K562 (cell line): ENCODE measurements at regions of chr16 and their contacts with region 1.

Region 1: GRCh38 chr16:66961065-66961744 is at the start of gene CES3:
- DNase-seq: peak; percentile 81 to 90 (median 86)
- ATAC-seq: peak; percentile 100
- H3K4me3 ChIP-seq: peak within 1 kb of the TSS; percentile 30
- H3K27ac ChIP-seq: no peak within 1 kb of the TSS; the same call in 2 of the 3 replicates
- H3K4me1 ChIP-seq: peaks cover 0 to 7% of the 10 kb centered on the region in 2 experiments; a peak in 2 of 5 replicates
- H3K27me3 ChIP-seq: peaks cover 2 to 13% of the 10 kb centered on the region in 2 experiments; a peak in 2 of 5 replicates
- CTCF ChIP-seq: peak; percentile 92 to 98 (median 96)
- EP300 ChIP-seq: no peak
- POLR2A ChIP-seq: no peak
- RAD21 ChIP-seq: peak in 1 of 2 experiments; percentile 43; a peak in 2 of 4 replicates
- polyA plus RNA-seq, gene CES3: 0.06 TPM

Region 2: DNA sequence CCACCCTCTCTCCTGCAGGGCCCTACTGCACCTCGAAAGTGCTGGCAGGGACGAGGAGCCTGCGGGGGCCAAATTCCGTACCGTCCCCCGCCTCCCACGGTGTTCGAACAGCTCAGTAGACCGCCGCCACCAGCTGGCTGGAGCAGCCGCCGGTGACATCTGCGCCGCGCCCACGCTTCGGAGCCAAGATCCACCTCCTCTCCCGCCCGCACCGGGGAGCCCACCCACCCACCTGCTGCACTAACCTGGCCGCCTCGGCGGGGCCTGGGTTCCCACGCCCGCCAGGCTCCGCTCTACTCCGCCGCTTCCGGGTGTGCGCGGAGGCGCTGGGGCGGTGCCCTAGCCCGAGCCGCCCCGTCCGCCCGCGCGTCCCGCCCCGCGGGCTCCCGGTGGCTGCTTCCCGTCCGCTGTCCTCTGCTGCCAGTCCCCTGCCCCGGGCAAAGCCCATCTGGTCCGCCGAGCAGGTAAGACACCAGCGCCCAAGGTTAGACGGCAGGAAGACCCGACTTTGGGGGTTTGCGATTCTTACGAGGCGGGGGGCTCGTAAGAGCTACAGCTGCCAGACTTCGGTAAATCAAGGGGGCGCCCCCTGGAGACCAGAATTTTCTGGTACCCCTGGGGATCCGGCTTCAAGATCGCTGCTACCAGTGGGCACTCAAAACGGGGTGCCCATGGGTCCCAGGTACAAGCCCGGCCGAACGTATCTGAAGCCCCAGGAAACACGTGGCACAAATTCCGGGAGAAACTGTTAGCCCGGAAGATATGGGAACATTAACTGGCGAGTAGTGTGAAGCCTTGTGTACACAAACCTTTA is 198.6 kb after region 1 on chr16 and contains the starts of genes FBXL8 and TRADD:
- CTCF ChIA-PET with region 1: no interaction called
- POLR2A ChIA-PET with region 1: no interaction called
- in situ Hi-C with region 1: loop called (anchors 25 kb)
- intact Hi-C with region 1: no loop called
- DNase-seq: peak; percentile 83 to 88 (median 88)
- ATAC-seq: peak; percentile 85
- H3K4me3 ChIP-seq: peak within 1 kb of the TSS; percentile 73
- H3K27ac ChIP-seq: peak within 1 kb of the TSS; percentile 78
- H3K4me1 ChIP-seq: peaks cover 25 to 75% of the 10 kb centered on the region in 2 experiments
- H3K27me3 ChIP-seq: no peaks in the 10 kb centered on the region
- CTCF ChIP-seq: peak; percentile 52 to 84 (median 60)
- EP300 ChIP-seq: no peak; the same call in 1 of the 2 replicates
- POLR2A ChIP-seq: peak; percentile 75
- RAD21 ChIP-seq: peak; percentile 23 to 25; a peak in 3 of 4 replicates
- polyA plus RNA-seq, gene FBXL8: 0.08 TPM in 1 of 2 experiments, not detected in the other
- polyA plus RNA-seq, gene TRADD: 0.76 to 1.7 TPM

Region 3: GRCh38 chr16:67415872-67416793 is 454.9 kb after region 1 on chr16 and contains the start of gene ZDHHC1:
- CTCF ChIA-PET with region 1: no interaction called
- POLR2A ChIA-PET with region 1: no interaction called
- in situ Hi-C with region 1: loop called (anchors 25 kb)
- intact Hi-C with region 1: no loop called
- DNase-seq: peak in 3 of 4 experiments; percentile 55 to 74 (median 72)
- ATAC-seq: peak; percentile 92
- H3K4me3 ChIP-seq: no peak within 1 kb of the TSS
- H3K27ac ChIP-seq: no peak within 1 kb of the TSS
- H3K4me1 ChIP-seq: peaks cover 0 to 9% of the 10 kb centered on the region in 2 experiments; a peak in 2 of 5 replicates
- H3K27me3 ChIP-seq: peaks cover 40 to 65% of the 10 kb centered on the region in 2 experiments
- CTCF ChIP-seq: peak; percentile 33 to 57 (median 50); a peak in 4 of 6 replicates
- EP300 ChIP-seq: no peak
- POLR2A ChIP-seq: no peak
- RAD21 ChIP-seq: peak in 1 of 2 experiments; percentile 52; a peak in 2 of 4 replicates
- polyA plus RNA-seq, gene ZDHHC1: not detected